ENCODE measurements at regions of chr19 and their contacts with region 1.

Region 1: GRCh38 chr19:2610637-2611482 is 91.6 kb downstream of the GNG7 start:
- DNase-seq: peak; percentile 76 to 87 (median 81)
- H3K4me3 ChIP-seq: peak overlapping the region in 1 of 2 donors; percentile 58
- H3K4me3 Mint-ChIP-seq: peak overlapping the region; percentile 79 to 92 (median 85)
- H3K27ac ChIP-seq: no peak overlapping the region
- H3K27ac Mint-ChIP-seq: peak overlapping the region; percentile 22 to 85 (median 73)
- H3K4me1 ChIP-seq: peaks cover 32% of the 10 kb centered on the region
- H3K4me1 Mint-ChIP-seq: peaks cover 18 to 49% (median 30%) of the 10 kb centered on the region in 4 donors
- H3K27me3 ChIP-seq: no peaks in the 10 kb centered on the region
- H3K27me3 Mint-ChIP-seq: peaks cover 2 to 7% of the 10 kb centered on the region in 2 donors

Region 2: GRCh38 chr19:2084993-2085720 is 525.7 kb before region 1 on chr19:
- CTCF ChIA-PET with region 1: no interaction called
- POLR2A ChIA-PET with region 1: no interaction called
- intact Hi-C with region 1: no loop called
- DNase-seq: peak; percentile 96 to 97 (median 97)
- H3K4me3 ChIP-seq: peak overlapping the region; percentile 80 to 97
- H3K4me3 Mint-ChIP-seq: peak overlapping the region; percentile 97 to 100 (median 99)
- H3K27ac ChIP-seq: peak overlapping the region; percentile 93
- H3K27ac Mint-ChIP-seq: peak overlapping the region; percentile 97 to 100 (median 99)
- H3K4me1 ChIP-seq: peaks cover 75% of the 10 kb centered on the region
- H3K4me1 Mint-ChIP-seq: peaks cover 45 to 85% (median 66%) of the 10 kb centered on the region in 4 donors
- H3K27me3 ChIP-seq: no peaks in the 10 kb centered on the region
- H3K27me3 Mint-ChIP-seq: peaks cover 0 to 2% of the 10 kb centered on the region in 2 donors

Region 3: GRCh38 chr19:2469102-2469914 is 141.6 kb before region 1 on chr19:
- CTCF ChIA-PET with region 1: interaction called, 109 read pairs
- POLR2A ChIA-PET with region 1: interaction called, 5 read pairs
- intact Hi-C with region 1: loop called (anchors 1 kb)
- DNase-seq: no peak
- H3K4me3 ChIP-seq: no peak overlapping the region
- H3K4me3 Mint-ChIP-seq: no peak overlapping the region
- H3K27ac ChIP-seq: no peak overlapping the region
- H3K27ac Mint-ChIP-seq: peak overlapping the region in 1 of 7 donors; percentile 19
- H3K4me1 ChIP-seq: no peaks in the 10 kb centered on the region
- H3K4me1 Mint-ChIP-seq: peaks cover 0 to 7% (median 2%) of the 10 kb centered on the region in 4 donors
- H3K27me3 ChIP-seq: no peaks in the 10 kb centered on the region
- H3K27me3 Mint-ChIP-seq: no peaks in the 10 kb centered on the region

Region 4: GRCh38 chr19:2552859-2553258 is 58.0 kb before region 1 on chr19:
- CTCF ChIA-PET with region 1: interaction called, 14 read pairs
- POLR2A ChIA-PET with region 1: interaction called, 3 read pairs
- intact Hi-C with region 1: loop called (anchors 2 kb)
- DNase-seq: peak; percentile 74 to 84 (median 80)
- H3K4me3 ChIP-seq: peak overlapping the region; percentile 36 to 46
- H3K4me3 Mint-ChIP-seq: peak overlapping the region; percentile 52 to 93 (median 82)
- H3K27ac ChIP-seq: peak overlapping the region; percentile 12
- H3K27ac Mint-ChIP-seq: peak overlapping the region; percentile 67 to 96 (median 78)
- H3K4me1 ChIP-seq: peaks cover 24% of the 10 kb centered on the region
- H3K4me1 Mint-ChIP-seq: peaks cover 9 to 18% (median 14%) of the 10 kb centered on the region in 4 donors
- H3K27me3 ChIP-seq: no peaks in the 10 kb centered on the region
- H3K27me3 Mint-ChIP-seq: no peaks in the 10 kb centered on the region

Region 5: GRCh38 chr19:2578901-2579677 is 31.8 kb before region 1 on chr19:
- CTCF ChIA-PET with region 1: interaction called, 26 read pairs
- POLR2A ChIA-PET with region 1: interaction called, 8 read pairs
- intact Hi-C with region 1: loop called (anchors 5 kb)
- DNase-seq: peak; percentile 48 to 59 (median 53)
- H3K4me3 ChIP-seq: peak overlapping the region in 1 of 2 donors; percentile 24
- H3K4me3 Mint-ChIP-seq: peak overlapping the region in 2 of 8 donors; percentile 60 to 62
- H3K27ac ChIP-seq: no peak overlapping the region
- H3K27ac Mint-ChIP-seq: peak overlapping the region in 2 of 7 donors; percentile 29 to 52
- H3K4me1 ChIP-seq: peaks cover 11% of the 10 kb centered on the region
- H3K4me1 Mint-ChIP-seq: peaks cover 0 to 12% (median 1%) of the 10 kb centered on the region in 4 donors
- H3K27me3 ChIP-seq: peaks cover 5% of the 10 kb centered on the region
- H3K27me3 Mint-ChIP-seq: peaks cover 4% of the 10 kb centered on the region in 2 donors

Region 6: GRCh38 chr19:2594319-2594718 is 16.5 kb before region 1 on chr19:
- CTCF ChIA-PET with region 1: interaction called, 77 read pairs
- POLR2A ChIA-PET with region 1: interaction called, 17 read pairs
- intact Hi-C with region 1: loop called (anchors 1 kb)
- DNase-seq: no peak
- H3K4me3 ChIP-seq: no peak overlapping the region
- H3K4me3 Mint-ChIP-seq: no peak overlapping the region
- H3K27ac ChIP-seq: no peak overlapping the region
- H3K27ac Mint-ChIP-seq: peak overlapping the region in 1 of 7 donors; percentile 19
- H3K4me1 ChIP-seq: peaks cover 7% of the 10 kb centered on the region
- H3K4me1 Mint-ChIP-seq: peaks cover 5 to 8% (median 6%) of the 10 kb centered on the region in 4 donors
- H3K27me3 ChIP-seq: no peaks in the 10 kb centered on the region
- H3K27me3 Mint-ChIP-seq: peaks cover 1 to 10% of the 10 kb centered on the region in 2 donors

Region 7: GRCh38 chr19:2627319-2627829 is 16.5 kb after region 1 on chr19:
- CTCF ChIA-PET with region 1: interaction called, 116 read pairs
- POLR2A ChIA-PET with region 1: interaction called, 22 read pairs
- intact Hi-C with region 1: no loop called
- DNase-seq: peak in 1 of 5 donors; percentile 38
- H3K4me3 ChIP-seq: no peak overlapping the region
- H3K4me3 Mint-ChIP-seq: no peak overlapping the region
- H3K27ac ChIP-seq: no peak overlapping the region
- H3K27ac Mint-ChIP-seq: peak overlapping the region in 4 of 7 donors; percentile 25 to 81 (median 70)
- H3K4me1 ChIP-seq: peaks cover 12% of the 10 kb centered on the region
- H3K4me1 Mint-ChIP-seq: peaks cover 11 to 51% (median 29%) of the 10 kb centered on the region in 4 donors
- H3K27me3 ChIP-seq: no peaks in the 10 kb centered on the region
- H3K27me3 Mint-ChIP-seq: no peaks in the 10 kb centered on the region

Region 8: GRCh38 chr19:2636897-2637683 is 26.2 kb after region 1 on chr19:
- CTCF ChIA-PET with region 1: interaction called, 116 read pairs
- POLR2A ChIA-PET with region 1: interaction called, 8 read pairs
- intact Hi-C with region 1: loop called (anchors 1 kb)
- DNase-seq: peak; percentile 69 to 72 (median 72)
- H3K4me3 ChIP-seq: no peak overlapping the region
- H3K4me3 Mint-ChIP-seq: peak overlapping the region in 1 of 8 donors; percentile 29
- H3K27ac ChIP-seq: no peak overlapping the region
- H3K27ac Mint-ChIP-seq: no peak overlapping the region
- H3K4me1 ChIP-seq: peaks cover 10% of the 10 kb centered on the region
- H3K4me1 Mint-ChIP-seq: peaks cover 0 to 6% (median 4%) of the 10 kb centered on the region in 4 donors
- H3K27me3 ChIP-seq: no peaks in the 10 kb centered on the region
- H3K27me3 Mint-ChIP-seq: no peaks in the 10 kb centered on the region